Activated naive CD4-positive, alpha-beta T cell treated with anti-CD3 and anti-CD28 coated beads for 36 hours (primary cell): ENCODE measurements at regions of chr11 and their contacts with region 1.

Region 1: DNA sequence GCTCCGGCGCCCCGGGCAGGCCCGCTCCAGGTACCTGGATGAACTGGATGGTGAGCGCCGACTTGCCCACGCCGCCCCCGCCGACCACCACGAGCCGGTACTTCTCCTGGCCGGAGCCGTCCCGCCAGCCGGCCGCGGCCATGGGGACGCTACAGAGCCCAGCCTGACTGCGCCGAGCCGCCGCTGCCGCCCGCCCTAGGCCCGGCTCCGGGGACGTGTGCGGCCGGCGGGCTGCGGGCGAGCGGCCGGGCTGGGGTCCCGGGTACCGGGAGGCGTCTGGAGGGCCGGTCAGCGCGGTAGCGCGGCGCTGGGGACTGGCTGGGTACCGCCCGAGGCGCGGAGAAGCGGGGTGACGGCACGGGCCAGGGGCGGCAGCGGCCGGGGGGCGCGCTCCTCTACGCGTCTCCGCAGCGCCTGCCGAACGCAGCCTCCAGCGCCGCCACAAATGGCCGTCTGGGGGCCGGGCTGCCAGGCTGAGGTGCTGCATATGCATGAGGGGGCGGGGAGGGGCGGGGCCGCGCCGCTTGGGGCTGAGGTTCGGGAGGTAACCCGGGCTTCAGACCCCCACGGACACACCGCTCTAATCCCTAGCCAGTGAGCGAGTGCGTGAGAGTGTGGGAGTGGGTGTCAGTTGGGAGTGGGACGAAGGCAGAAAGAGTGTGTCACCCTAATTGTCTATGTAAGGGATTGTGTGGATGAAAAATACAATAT is at the start of gene RRAS2:
- DNase-seq: peak; percentile 77
- H3K4me3 Mint-ChIP-seq: peak within 1 kb of the TSS; percentile 92
- H3K27ac Mint-ChIP-seq: peak within 1 kb of the TSS; percentile 68
- H3K4me1 Mint-ChIP-seq: peaks cover 26% of the 10 kb centered on the region
- H3K27me3 Mint-ChIP-seq: no peaks in the 10 kb centered on the region
- total RNA-seq, gene RRAS2: 36.6 to 36.8 TPM

Region 2: DNA sequence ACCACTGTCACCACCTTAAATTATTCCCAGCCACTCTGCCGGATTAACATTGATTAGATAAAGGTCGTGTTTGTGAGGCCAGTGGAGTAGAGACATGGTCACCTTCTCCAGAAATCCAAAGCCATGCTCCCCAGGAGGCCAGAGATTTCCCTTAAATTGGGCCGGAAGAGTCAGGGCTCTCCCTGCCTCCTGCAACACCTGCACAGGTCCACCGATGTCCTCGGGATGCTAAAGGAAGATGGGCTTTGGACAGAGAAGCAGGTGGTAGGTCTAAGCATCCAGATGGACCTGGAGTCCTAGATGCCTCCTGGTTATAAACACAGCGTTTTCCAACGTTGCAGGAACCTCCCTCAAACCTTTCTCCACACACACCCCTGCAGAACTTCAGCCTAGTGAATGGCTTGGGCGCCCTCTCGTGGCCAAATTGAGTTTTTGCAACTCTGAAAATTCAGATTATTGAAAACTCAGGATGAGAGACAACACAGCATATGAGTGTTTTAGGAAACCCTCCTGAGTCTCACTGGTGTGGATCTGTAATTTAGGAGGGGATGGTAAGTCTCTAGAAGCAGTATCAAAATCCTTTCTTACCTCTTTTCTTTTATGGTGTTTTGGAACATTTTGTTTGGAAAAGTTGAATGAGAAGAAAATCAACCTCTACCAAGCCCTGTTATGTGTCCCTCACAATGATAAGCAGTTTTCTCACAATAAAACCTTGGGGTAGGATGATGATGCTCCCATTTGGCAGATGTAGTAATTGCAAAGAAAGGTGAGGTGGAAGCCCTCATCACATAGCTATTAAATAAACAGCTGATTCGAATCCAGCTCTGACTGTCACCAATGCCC is 109.5 kb before region 1 on chr11:
- CTCF ChIA-PET with region 1: no interaction called
- intact Hi-C with region 1: no loop called
- DNase-seq: peak; percentile 82
- H3K4me3 Mint-ChIP-seq: no peak overlapping the region
- H3K27ac Mint-ChIP-seq: no peak overlapping the region
- H3K4me1 Mint-ChIP-seq: peaks cover 15% of the 10 kb centered on the region
- H3K27me3 Mint-ChIP-seq: no peaks in the 10 kb centered on the region

Region 3: DNA sequence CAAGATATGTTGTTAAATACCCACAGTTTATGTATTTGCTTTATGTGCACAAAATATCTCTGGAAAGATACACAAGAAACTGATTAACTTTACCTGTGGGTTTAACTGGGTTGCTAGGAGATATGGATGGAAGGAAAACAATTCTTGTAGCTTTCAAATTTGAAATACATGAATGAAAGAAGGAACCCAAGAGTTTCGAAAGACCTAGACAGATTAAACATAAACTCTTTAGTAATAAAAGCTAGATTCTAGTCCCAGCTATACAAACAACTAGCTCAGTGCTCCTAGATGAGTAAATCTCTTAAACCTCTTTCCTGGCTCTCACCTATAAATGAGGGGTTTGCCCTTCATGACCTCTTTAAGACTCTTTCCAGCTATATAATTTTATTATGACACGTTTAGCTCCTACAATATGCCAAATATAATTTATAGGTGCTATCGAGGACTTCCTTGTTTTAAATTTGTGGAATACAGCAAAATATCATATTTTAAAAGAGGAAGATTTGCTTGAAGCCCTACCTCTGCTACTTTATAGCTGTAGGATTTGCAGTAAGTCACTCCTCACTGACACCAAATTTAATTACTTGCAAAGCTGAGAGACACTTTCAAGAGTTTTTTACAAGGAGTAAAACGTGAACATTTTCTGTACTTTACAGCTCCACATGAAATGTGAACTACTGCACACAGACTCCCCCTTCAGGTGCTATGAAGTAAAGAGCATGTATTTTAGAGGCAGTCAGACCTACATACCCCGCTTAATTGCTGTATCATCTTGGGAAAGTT is 50.6 kb before region 1 on chr11:
- CTCF ChIA-PET with region 1: no interaction called
- intact Hi-C with region 1: loop called (anchors 2 kb)
- DNase-seq: no peak
- H3K4me3 Mint-ChIP-seq: no peak overlapping the region
- H3K27ac Mint-ChIP-seq: no peak overlapping the region
- H3K4me1 Mint-ChIP-seq: peaks cover 19% of the 10 kb centered on the region
- H3K27me3 Mint-ChIP-seq: no peaks in the 10 kb centered on the region

Region 4: GRCh38 chr11:14320020-14320419 is 38.9 kb before region 1 on chr11:
- CTCF ChIA-PET with region 1: no interaction called
- intact Hi-C with region 1: loop called (anchors 2 kb)
- DNase-seq: peak; percentile 55
- H3K4me3 Mint-ChIP-seq: no peak overlapping the region
- H3K27ac Mint-ChIP-seq: no peak overlapping the region
- H3K4me1 Mint-ChIP-seq: peaks cover 36% of the 10 kb centered on the region
- H3K27me3 Mint-ChIP-seq: no peaks in the 10 kb centered on the region

Region 5: GRCh38 chr11:14336507-14337503 is 22.1 kb before region 1 on chr11:
- CTCF ChIA-PET with region 1: interaction called, 3 read pairs
- intact Hi-C with region 1: loop called (anchors 2 kb)
- DNase-seq: peak; percentile 32
- H3K4me3 Mint-ChIP-seq: peak overlapping the region; percentile 16
- H3K27ac Mint-ChIP-seq: peak overlapping the region; percentile 76
- H3K4me1 Mint-ChIP-seq: peaks cover 52% of the 10 kb centered on the region
- H3K27me3 Mint-ChIP-seq: no peaks in the 10 kb centered on the region

Region 6: GRCh38 chr11:14342906-14343305 is 16.0 kb before region 1 on chr11:
- CTCF ChIA-PET with region 1: no interaction called
- intact Hi-C with region 1: loop called (anchors 2 kb)
- DNase-seq: no peak
- H3K4me3 Mint-ChIP-seq: no peak overlapping the region
- H3K27ac Mint-ChIP-seq: no peak overlapping the region
- H3K4me1 Mint-ChIP-seq: peaks cover 51% of the 10 kb centered on the region
- H3K27me3 Mint-ChIP-seq: no peaks in the 10 kb centered on the region

Region 7: GRCh38 chr11:14373931-14374646 is 15.2 kb after region 1 on chr11:
- CTCF ChIA-PET with region 1: interaction called, 3 read pairs
- intact Hi-C with region 1: loop called (anchors 1 kb)
- DNase-seq: no peak
- H3K4me3 Mint-ChIP-seq: no peak overlapping the region
- H3K27ac Mint-ChIP-seq: no peak overlapping the region
- H3K4me1 Mint-ChIP-seq: peaks cover 52% of the 10 kb centered on the region
- H3K27me3 Mint-ChIP-seq: peaks cover 7% of the 10 kb centered on the region

Region 8: GRCh38 chr11:14519917-14520746 is 161.2 kb after region 1 on chr11 and contains the start of gene PSMA1:
- CTCF ChIA-PET with region 1: no interaction called
- intact Hi-C with region 1: loop called (anchors 1 kb)
- DNase-seq: peak; percentile 98
- H3K4me3 Mint-ChIP-seq: peak within 1 kb of the TSS; percentile 96
- H3K27ac Mint-ChIP-seq: peak within 1 kb of the TSS; percentile 97
- H3K4me1 Mint-ChIP-seq: peaks cover 24% of the 10 kb centered on the region
- H3K27me3 Mint-ChIP-seq: no peaks in the 10 kb centered on the region
- total RNA-seq, gene PSMA1: 367 to 375 TPM